IMR-90 (cell line): ENCODE measurements at regions of chr2 and their contacts with region 1.

Region 1: DNA sequence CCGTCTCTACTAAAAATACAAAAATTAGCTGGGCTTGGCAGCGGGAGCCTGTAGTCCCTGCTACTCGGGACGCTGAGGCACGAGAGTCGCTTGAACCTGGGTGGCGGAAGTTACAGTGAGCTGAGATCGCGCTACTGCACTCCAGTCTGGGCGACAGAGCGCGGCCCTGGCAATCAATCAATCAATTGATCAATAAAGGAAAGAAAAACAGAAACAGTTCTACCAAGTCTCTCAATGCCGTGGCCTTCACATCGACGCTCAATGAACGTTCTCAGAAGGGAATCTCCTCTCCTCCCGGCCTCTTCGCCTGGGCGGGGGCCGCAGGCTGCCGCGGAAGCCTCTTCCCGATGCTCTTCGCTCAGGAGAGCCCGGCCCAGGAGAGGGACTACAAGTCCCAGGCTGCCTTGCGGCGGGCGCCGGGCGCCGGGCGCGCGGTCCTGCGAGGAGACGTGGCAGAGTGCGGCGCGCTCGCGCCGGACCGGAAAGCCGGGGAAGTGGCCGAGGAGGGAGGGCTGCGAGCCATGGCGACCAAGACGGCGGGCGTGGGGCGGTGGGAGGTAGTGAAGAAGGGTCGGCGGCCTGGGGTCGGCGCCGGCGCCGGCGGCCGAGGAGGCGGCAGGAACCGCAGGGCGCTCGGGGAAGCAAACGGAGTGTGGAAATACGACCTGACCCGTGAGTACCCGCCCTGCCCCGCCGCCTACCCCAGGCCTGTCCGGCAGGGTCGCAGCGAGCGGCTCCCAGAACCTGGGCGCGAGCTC is at the start of gene TMEM214:
- DNase-seq: peak; percentile 89
- ATAC-seq: peak; percentile 96
- H3K4me3 ChIP-seq: peak within 1 kb of the TSS; percentile 94
- H3K27ac ChIP-seq: peak within 1 kb of the TSS; percentile 90
- H3K4me1 ChIP-seq: peaks cover 7% of the 10 kb centered on the region
- H3K27me3 ChIP-seq: no peaks in the 10 kb centered on the region
- CTCF ChIP-seq: no peak
- POLR2A ChIP-seq: peak; percentile 96
- RAD21 ChIP-seq: no peak
- total RNA-seq, gene TMEM214: 31.7 and 32.1 TPM in 2 replicates

Region 2: DNA sequence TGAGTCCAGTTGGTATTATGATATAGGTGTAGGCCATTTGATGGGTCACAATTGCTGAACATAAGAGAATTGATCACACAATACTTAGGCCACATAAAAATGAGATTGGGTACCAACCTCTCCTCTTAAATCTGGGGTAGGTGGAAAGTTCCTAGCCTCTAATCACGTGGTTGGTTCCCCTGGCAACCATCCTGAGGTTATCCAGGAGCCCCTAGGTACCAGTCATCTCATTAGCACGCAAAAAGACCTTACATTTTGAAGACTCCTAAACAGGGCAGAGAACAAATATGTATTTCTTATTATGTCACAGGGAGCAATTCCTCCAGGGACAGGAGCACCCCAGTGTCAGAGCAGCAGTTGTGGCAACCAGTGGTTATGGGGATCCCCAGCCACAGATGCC is 699.4 kb before region 1 on chr2:
- CTCF ChIA-PET with region 1: no interaction called
- POLR2A ChIA-PET with region 1: no interaction called
- dilution Hi-C with region 1: no loop called
- in situ Hi-C with region 1: no loop called
- intact Hi-C with region 1: no loop called
- DNase-seq: no peak
- ATAC-seq: no peak
- H3K4me3 ChIP-seq: no peak overlapping the region
- H3K27ac ChIP-seq: no peak overlapping the region
- H3K4me1 ChIP-seq: no peaks in the 10 kb centered on the region
- H3K27me3 ChIP-seq: peaks cover 11% of the 10 kb centered on the region
- CTCF ChIP-seq: no peak
- POLR2A ChIP-seq: no peak
- RAD21 ChIP-seq: no peak

Region 3: GRCh38 chr2:27059141-27059820 is 26.6 kb after region 1 on chr2:
- CTCF ChIA-PET with region 1: no interaction called
- POLR2A ChIA-PET with region 1: interaction called, 20 read pairs
- dilution Hi-C with region 1: no loop called
- in situ Hi-C with region 1: no loop called
- intact Hi-C with region 1: no loop called
- DNase-seq: no peak
- ATAC-seq: no peak
- H3K4me3 ChIP-seq: no peak overlapping the region
- H3K27ac ChIP-seq: no peak overlapping the region
- H3K4me1 ChIP-seq: no peaks in the 10 kb centered on the region; the same call in 1 of the 2 replicates
- H3K27me3 ChIP-seq: no peaks in the 10 kb centered on the region
- CTCF ChIP-seq: no peak
- POLR2A ChIP-seq: no peak
- RAD21 ChIP-seq: no peak

Region 4: DNA sequence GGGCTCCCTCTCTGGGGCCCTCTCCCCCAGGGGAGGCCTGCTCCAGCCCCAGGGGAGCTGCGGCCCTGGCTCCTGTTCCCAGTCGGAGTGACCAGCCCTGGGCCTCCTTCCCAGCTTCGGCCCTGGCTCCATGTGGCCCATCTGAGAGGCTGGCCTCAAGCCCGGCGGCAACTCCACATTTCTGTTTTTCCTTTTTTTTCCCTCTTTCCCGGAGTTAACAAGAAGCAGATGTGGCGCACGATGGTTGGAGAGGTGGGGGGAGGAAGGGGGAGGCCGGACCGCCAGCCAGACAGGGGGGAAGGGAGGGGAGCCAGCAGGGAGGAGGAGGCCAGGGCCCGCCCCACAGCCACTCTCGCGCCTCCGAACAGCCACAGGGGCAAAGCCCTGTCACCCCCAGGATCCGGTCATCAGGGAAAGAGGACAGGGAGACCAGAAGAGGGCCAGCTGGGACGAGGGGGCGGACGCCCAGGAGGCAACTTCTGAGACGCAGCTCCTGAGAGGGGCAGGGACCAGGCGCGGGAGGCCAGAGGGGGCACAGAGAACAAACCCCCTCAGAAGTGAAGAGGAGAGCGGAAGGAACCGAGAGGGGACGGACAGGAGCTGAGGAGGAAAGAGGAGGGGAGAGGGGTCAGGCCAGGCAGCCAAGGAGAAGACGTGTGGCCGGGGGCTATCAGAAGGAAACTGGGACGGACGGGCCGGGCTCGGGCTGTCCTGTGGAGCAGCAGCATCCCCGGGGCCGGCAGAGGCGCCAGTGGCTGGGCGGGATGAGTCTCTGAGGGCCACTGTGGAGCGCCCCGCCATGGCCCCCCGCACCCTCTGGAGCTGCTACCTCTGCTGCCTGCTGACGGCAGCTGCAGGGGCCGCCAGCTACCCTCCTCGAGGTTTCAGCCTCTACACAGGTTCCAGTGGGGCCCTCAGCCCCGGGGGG is 45.9 kb after region 1 on chr2 and contains the start of gene EMILIN1:
- CTCF ChIA-PET with region 1: no interaction called
- POLR2A ChIA-PET with region 1: interaction called, 11 read pairs
- dilution Hi-C with region 1: no loop called
- in situ Hi-C with region 1: no loop called
- intact Hi-C with region 1: no loop called
- DNase-seq: peak; percentile 96
- ATAC-seq: peak; percentile 80
- H3K4me3 ChIP-seq: peak within 1 kb of the TSS; percentile 82
- H3K27ac ChIP-seq: peak within 1 kb of the TSS; percentile 98
- H3K4me1 ChIP-seq: peaks cover 30% of the 10 kb centered on the region
- H3K27me3 ChIP-seq: no peaks in the 10 kb centered on the region
- CTCF ChIP-seq: no peak
- POLR2A ChIP-seq: peak; percentile 47; the same call in 1 of the 2 replicates
- RAD21 ChIP-seq: no peak
- total RNA-seq, gene EMILIN1: 26.5 and 27.8 TPM in 2 replicates

Region 5: DNA sequence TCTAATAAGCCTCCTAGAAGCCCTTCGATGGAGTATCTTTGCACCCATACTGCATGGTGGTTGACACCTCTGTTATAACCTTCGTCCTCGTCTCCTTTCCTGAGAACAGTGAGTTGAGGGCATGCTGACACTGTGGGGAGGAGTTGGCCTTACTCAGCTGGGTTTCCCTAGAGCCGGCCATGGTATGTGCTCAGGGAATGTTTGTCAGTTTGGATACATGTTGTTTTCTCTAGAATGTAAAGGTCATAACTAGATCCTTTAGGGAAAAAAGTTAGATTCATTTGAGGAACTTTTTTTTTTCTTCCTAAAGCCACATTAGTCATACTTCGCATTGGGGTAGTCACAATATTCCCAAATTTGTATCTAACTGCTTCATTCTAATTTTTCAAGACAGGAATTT is 1254.0 kb after region 1 on chr2:
- CTCF ChIA-PET with region 1: no interaction called
- POLR2A ChIA-PET with region 1: no interaction called
- dilution Hi-C with region 1: no loop called
- in situ Hi-C with region 1: no loop called
- intact Hi-C with region 1: no loop called
- DNase-seq: peak; percentile 60
- ATAC-seq: peak; percentile 92
- H3K4me3 ChIP-seq: no peak overlapping the region
- H3K27ac ChIP-seq: peak overlapping the region; percentile 77
- H3K4me1 ChIP-seq: peaks cover 13% of the 10 kb centered on the region
- H3K27me3 ChIP-seq: no peaks in the 10 kb centered on the region
- CTCF ChIP-seq: no peak
- POLR2A ChIP-seq: no peak
- RAD21 ChIP-seq: no peak